ENCODE measurements at regions of chr14 and their contacts with region 1.

Region 1: GRCh38 chr14:52961060-52961639 is 10.3 kb upstream of the FERMT2 start:
- DNase-seq: peak; percentile 57 to 70
- H3K4me3 ChIP-seq: no peak overlapping the region
- H3K27ac ChIP-seq: no peak overlapping the region
- H3K4me1 ChIP-seq: no peaks in the 10 kb centered on the region
- H3K27me3 ChIP-seq: no peaks in the 10 kb centered on the region
- CTCF ChIP-seq: peak; percentile 81

Region 2: GRCh38 chr14:52272375-52272774 is 688.8 kb before region 1 on chr14:
- CTCF ChIA-PET with region 1: no interaction called
- POLR2A ChIA-PET with region 1: no interaction called
- intact Hi-C with region 1: no loop called
- DNase-seq: no peak
- H3K4me3 ChIP-seq: no peak overlapping the region
- H3K27ac ChIP-seq: no peak overlapping the region
- H3K4me1 ChIP-seq: no peaks in the 10 kb centered on the region
- H3K27me3 ChIP-seq: no peaks in the 10 kb centered on the region
- CTCF ChIP-seq: peak; percentile 44

Region 3: DNA sequence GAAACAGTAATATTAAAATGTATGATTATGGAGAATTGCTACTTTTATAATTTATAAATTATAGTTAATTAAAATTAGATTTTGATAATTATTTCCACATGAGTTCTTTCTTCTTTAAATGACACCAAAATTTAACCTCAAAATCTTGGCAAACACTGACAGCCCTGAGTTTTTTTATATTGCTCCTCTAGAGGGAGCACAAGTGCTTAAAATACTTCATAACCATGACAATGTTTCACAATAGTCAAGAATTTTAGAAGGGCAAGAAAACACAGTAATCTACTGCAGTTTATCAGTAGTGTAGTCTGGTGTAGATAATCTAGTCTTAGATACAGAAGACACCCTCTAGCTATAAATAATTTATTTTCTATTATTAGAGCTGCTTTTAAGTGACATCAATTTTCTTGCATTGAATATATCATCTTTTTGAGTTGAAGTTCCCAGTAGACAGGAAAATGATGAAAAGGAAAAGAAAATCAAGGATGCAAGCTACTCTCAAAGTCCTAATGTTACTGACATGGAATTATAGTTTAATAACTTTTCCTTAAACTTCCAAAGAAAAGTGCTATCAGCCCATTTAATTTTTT is 661.4 kb before region 1 on chr14:
- CTCF ChIA-PET with region 1: no interaction called
- POLR2A ChIA-PET with region 1: interaction called, 27 read pairs
- intact Hi-C with region 1: no loop called
- DNase-seq: peak in 1 of 2 experiments; percentile 58
- H3K4me3 ChIP-seq: no peak overlapping the region
- H3K27ac ChIP-seq: no peak overlapping the region
- H3K4me1 ChIP-seq: no peaks in the 10 kb centered on the region
- H3K27me3 ChIP-seq: no peaks in the 10 kb centered on the region
- CTCF ChIP-seq: peak; percentile 86

Region 4: GRCh38 chr14:52801015-52801712 is 160.0 kb before region 1 on chr14:
- CTCF ChIA-PET with region 1: interaction called, 24 read pairs
- POLR2A ChIA-PET with region 1: no interaction called
- intact Hi-C with region 1: no loop called
- DNase-seq: no peak
- H3K4me3 ChIP-seq: no peak overlapping the region
- H3K27ac ChIP-seq: no peak overlapping the region
- H3K4me1 ChIP-seq: no peaks in the 10 kb centered on the region
- H3K27me3 ChIP-seq: no peaks in the 10 kb centered on the region
- CTCF ChIP-seq: no peak

Region 5: GRCh38 chr14:53055003-53055402 is 93.9 kb after region 1 on chr14:
- CTCF ChIA-PET with region 1: no interaction called
- POLR2A ChIA-PET with region 1: interaction called, 6 read pairs
- intact Hi-C with region 1: loop called (anchors 5 kb)
- DNase-seq: no peak
- H3K4me3 ChIP-seq: no peak overlapping the region
- H3K27ac ChIP-seq: no peak overlapping the region
- H3K4me1 ChIP-seq: no peaks in the 10 kb centered on the region
- H3K27me3 ChIP-seq: no peaks in the 10 kb centered on the region
- CTCF ChIP-seq: peak; percentile 75

Region 6: GRCh38 chr14:54347997-54348611 is 1387.0 kb after region 1 on chr14:
- CTCF ChIA-PET with region 1: no interaction called
- POLR2A ChIA-PET with region 1: no interaction called
- intact Hi-C with region 1: loop called (anchors 10 kb)
- DNase-seq: peak in 1 of 2 experiments; percentile 48
- H3K4me3 ChIP-seq: no peak overlapping the region
- H3K27ac ChIP-seq: no peak overlapping the region
- H3K4me1 ChIP-seq: peaks cover 4% of the 10 kb centered on the region
- H3K27me3 ChIP-seq: no peaks in the 10 kb centered on the region
- CTCF ChIP-seq: peak; percentile 91